ENCODE measurements at regions of chr3 and their contacts with region 1.

Region 1: DNA sequence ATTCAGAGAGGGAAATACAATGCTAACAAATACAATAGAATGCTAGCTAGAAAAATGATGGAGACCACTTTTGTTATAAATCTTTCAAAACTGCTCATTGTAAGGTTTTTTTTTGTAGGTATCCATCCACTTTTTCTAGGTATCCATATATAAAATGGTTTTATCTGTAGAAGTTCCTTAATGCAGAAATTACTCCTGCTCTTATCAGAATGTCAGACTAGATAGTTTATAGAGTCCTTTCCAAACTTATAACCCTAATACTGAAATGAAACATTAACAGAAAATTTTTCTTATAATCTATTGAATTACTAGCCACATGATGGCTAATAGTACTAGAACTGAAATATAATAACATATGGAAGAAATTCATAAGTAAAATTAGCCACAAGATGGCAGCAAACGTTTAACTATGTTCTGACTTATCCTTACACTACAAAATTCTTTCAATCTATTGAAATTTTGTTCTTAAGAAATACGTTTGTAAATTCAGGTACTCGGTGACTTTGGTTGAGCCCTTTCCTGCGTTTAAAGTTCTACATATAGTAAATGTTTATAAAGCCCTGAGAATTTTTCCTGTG is 58.5 kb downstream of the ECT2 start:
- DNase-seq: peak; percentile 63
- H3K4me3 ChIP-seq: no peak overlapping the region
- H3K27ac ChIP-seq: no peak overlapping the region
- H3K4me1 ChIP-seq: no peaks in the 10 kb centered on the region
- H3K27me3 ChIP-seq: no peaks in the 10 kb centered on the region
- CTCF ChIP-seq: peak in 1 of 2 donors; percentile 2
- POLR2A ChIP-seq: no peak

Region 2: GRCh38 chr3:172746476-172746875 is 62.6 kb before region 1 on chr3:
- CTCF ChIA-PET with region 1: no interaction called
- POLR2A ChIA-PET with region 1: no interaction called
- dilution Hi-C with region 1: no loop called
- intact Hi-C with region 1: no loop called
- DNase-seq: no peak
- H3K4me3 ChIP-seq: no peak overlapping the region
- H3K27ac ChIP-seq: no peak overlapping the region
- H3K4me1 ChIP-seq: peaks cover 17% of the 10 kb centered on the region
- H3K27me3 ChIP-seq: no peaks in the 10 kb centered on the region
- CTCF ChIP-seq: no peak
- POLR2A ChIP-seq: no peak

Region 3: GRCh38 chr3:172965256-172965655 is 156.2 kb after region 1 on chr3:
- CTCF ChIA-PET with region 1: no interaction called
- POLR2A ChIA-PET with region 1: no interaction called
- dilution Hi-C with region 1: no loop called
- intact Hi-C with region 1: no loop called
- DNase-seq: peak; percentile 19
- H3K4me3 ChIP-seq: no peak overlapping the region
- H3K27ac ChIP-seq: no peak overlapping the region
- H3K4me1 ChIP-seq: no peaks in the 10 kb centered on the region
- H3K27me3 ChIP-seq: no peaks in the 10 kb centered on the region
- CTCF ChIP-seq: no peak
- POLR2A ChIP-seq: no peak

Region 4: DNA sequence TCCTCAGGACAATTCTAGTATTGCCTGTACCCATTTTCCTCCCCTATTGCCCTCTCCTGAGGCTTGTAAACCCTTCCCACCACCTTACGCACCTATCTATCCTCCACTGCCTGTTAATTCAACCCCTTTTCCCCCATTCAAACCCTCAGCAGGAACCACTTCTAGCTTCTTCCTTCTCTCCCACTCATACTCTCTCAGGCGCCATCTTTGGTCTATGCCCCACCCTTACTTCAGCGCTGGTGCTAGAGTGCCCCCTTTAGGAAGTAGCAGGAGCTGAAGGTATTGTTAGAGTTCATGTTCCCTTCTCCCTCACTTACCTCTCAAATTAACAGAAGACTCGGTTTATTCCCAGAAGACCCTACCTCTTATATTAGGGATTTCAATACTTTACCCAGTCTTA is 466.7 kb after region 1 on chr3:
- CTCF ChIA-PET with region 1: no interaction called
- POLR2A ChIA-PET with region 1: no interaction called
- dilution Hi-C with region 1: no loop called
- intact Hi-C with region 1: loop called (anchors 2 kb)
- DNase-seq: no peak
- H3K4me3 ChIP-seq: no peak overlapping the region
- H3K27ac ChIP-seq: no peak overlapping the region
- H3K4me1 ChIP-seq: no peaks in the 10 kb centered on the region
- H3K27me3 ChIP-seq: no peaks in the 10 kb centered on the region
- CTCF ChIP-seq: peak in 1 of 2 donors; percentile 9
- POLR2A ChIP-seq: no peak

Measured in endothelial cell of umbilical vein (primary cell).